Left colon (tissue), 2 donors: ENCODE measurements at regions of chr19 and their contacts with region 1.

Region 1: GRCh38 chr19:48582168-48582567 is 24.4 kb upstream of the SPACA4 start:
- DNase-seq: no peak
- ATAC-seq: no peak

Region 2: GRCh38 chr19:48489608-48490216 is 92.5 kb before region 1 on chr19:
- intact Hi-C with region 1: loop called in 1 of 2 experiments (anchors 5 kb)
- DNase-seq: peak; percentile 67 to 83
- ATAC-seq: peak; percentile 22

Region 3: DNA sequence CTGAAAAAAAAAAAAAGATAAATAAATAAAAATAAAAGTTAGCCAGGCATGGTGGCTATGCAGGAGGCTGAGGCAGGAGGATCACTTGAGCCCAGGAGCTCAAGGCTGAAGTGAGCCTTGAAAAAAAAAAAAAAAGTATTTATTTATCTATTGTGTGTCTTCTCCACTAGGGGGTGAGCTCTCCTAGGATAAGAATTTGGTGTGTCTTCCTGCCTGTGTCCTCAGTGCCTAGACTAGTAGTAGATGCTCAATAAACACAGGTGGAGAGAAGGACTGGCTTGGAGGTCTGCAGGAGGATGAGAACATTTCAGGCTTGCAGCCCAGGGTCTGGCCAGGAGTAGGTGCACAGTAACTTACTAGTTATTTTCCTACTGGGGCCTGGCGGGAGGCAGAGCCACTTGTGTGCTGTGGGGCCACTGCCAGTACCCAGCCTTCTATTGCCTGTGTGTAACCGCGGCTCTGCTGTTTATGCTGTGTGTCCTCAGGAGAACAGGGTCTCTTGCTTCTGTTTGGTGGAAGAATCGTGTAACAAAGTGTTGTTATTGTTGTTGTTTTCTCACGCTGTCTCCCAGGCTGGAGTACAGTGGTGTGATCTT is 75.9 kb before region 1 on chr19:
- intact Hi-C with region 1: loop called in 1 of 2 experiments (anchors 5 kb)
- DNase-seq: no peak
- ATAC-seq: peak; percentile 26